ENCODE measurements at regions of chr3 and their contacts with region 1.

Region 1: DNA sequence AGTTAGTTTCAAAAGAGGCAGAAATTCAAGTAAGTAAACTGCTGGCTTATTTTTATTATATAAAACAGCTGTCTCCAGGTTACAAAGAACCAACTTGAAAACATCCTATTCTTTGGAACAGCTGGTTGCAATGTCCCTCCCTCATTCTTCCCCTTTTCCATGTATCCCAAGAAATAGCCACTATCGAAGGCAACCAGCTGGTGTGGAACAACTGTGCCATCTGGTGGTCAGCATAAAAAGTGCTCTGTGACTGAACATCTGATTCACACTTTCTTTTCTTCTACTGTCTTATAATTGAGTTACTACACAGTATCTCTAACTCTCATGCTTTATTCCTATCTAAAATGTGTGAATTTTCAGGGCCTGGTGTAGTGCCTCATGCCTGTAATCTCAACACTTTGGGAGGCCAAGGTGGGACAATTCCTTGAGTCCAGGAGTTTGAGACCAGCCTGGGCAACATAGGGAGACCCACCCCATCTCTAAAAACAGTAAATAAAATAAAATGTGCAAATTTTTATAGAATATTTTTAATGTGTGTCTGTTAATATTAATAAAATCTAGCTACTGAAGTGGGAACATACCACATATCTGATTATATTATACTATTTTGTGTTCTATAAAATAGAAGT is 9.6 kb downstream of the OSBPL11 start:
- DNase-seq: peak; percentile 48
- H3K4me3 ChIP-seq: no peak overlapping the region
- H3K27ac ChIP-seq: no peak overlapping the region
- H3K4me1 ChIP-seq: peaks cover 22% of the 10 kb centered on the region
- CTCF ChIP-seq: peak; percentile 97

Region 2: DNA sequence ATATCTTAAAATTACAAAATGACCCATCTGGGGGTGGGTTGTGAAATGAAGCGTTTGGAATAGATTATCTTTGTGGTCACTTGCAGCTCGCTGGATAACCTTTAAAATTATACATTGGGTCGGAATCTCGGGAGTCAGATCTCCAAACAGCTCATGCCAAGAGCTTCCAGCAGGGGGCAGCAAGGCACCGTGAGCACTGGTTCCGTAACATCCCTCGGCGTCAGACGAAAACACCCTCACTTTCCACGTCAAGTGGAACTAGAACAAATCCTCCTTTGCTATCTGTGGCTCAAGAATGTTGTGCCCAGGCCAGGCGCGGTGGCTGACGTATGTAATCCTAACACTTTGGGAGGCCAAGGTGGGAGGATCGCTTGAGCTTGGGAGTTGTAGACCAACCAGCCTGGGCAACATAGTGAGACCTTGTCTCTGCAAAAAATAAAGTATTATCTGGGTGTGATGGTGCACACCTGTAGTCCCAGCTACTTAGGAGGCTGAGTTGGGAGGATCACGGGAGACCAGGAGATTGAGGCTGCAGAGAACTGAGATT is 824.4 kb before region 1 on chr3:
- CTCF ChIA-PET with region 1: no interaction called
- POLR2A ChIA-PET with region 1: interaction called, 4 read pairs
- intact Hi-C with region 1: loop called (anchors 10 kb)
- DNase-seq: peak; percentile 65
- H3K4me3 ChIP-seq: no peak overlapping the region
- H3K27ac ChIP-seq: no peak overlapping the region
- H3K4me1 ChIP-seq: no peaks in the 10 kb centered on the region
- CTCF ChIP-seq: peak; percentile 94

Region 3: DNA sequence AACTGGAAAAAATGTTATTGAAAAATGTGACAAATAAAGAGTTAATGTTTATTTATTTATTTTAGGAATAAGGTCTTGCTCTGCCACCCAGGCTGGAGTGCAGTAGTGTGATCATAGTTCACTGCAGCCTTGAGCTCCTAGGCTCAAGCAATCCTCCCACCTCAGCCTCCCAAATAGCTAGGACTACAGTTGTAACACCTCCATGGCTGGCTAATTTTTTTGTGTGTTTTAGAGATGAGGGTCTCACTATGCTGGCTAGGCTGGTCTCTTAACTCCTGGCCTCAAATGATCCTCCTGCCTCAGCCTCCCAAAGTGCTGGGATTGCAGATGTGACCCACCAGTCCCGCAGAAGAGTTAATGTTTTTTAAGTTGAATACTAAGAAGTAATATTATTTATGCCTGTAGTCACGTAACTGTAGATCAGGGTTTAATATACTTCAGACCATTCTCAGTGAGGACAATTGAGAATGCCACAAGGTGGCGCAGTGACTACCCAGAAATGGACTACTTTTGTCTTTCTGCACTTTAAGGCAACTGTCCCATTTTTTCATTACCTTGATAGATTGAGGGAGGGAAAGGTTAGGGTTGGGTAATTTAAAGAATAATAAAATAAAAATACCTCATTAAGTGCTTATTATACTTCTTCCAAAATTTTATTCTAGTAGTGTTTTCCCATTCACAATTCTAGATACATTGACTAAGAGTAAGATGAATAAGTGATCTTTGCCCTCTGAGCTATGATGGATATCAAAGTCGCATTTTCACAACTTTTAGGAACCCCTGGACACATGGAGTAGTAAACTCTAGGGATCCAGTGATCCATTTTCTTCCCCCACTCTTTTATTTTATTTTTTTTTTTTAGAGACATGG is 657.1 kb before region 1 on chr3:
- CTCF ChIA-PET with region 1: no interaction called
- POLR2A ChIA-PET with region 1: no interaction called
- intact Hi-C with region 1: loop called (anchors 5 kb)
- DNase-seq: peak; percentile 60
- H3K4me3 ChIP-seq: no peak overlapping the region
- H3K27ac ChIP-seq: no peak overlapping the region
- H3K4me1 ChIP-seq: no peaks in the 10 kb centered on the region
- CTCF ChIP-seq: peak; percentile 90

Region 4: GRCh38 chr3:125150525-125151441 is 434.9 kb before region 1 on chr3:
- CTCF ChIA-PET with region 1: no interaction called
- POLR2A ChIA-PET with region 1: no interaction called
- intact Hi-C with region 1: loop called (anchors 5 kb)
- DNase-seq: peak; percentile 68
- H3K4me3 ChIP-seq: no peak overlapping the region
- H3K27ac ChIP-seq: no peak overlapping the region
- H3K4me1 ChIP-seq: peaks cover 6% of the 10 kb centered on the region
- CTCF ChIP-seq: peak; percentile 86

Region 5: GRCh38 chr3:125478326-125478725 is 107.4 kb before region 1 on chr3:
- CTCF ChIA-PET with region 1: no interaction called
- POLR2A ChIA-PET with region 1: no interaction called
- intact Hi-C with region 1: no loop called
- DNase-seq: no peak
- H3K4me3 ChIP-seq: no peak overlapping the region
- H3K27ac ChIP-seq: no peak overlapping the region
- H3K4me1 ChIP-seq: no peaks in the 10 kb centered on the region
- CTCF ChIP-seq: no peak

Region 6: DNA sequence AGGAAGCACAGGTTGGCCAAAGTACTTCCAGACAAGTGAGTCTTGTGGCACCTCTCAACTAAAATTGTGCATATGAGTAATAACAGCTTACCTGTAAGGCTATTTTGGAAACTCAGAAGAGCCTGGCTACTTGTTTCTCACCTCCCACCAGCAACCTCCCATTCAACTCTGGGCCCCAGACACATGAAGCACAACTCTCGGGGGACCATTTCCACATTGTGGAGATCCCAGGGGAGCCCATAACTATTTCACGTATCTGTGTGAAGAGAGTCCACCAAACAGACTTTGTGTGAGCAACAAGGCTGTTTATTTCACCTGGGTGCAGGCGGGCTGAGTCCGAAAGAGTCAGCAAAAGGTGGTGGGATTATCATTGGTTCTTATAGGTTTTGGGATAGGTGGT is 60.6 kb before region 1 on chr3:
- CTCF ChIA-PET with region 1: no interaction called
- POLR2A ChIA-PET with region 1: no interaction called
- intact Hi-C with region 1: loop called (anchors 5 kb)
- DNase-seq: no peak
- H3K4me3 ChIP-seq: no peak overlapping the region
- H3K27ac ChIP-seq: no peak overlapping the region
- H3K4me1 ChIP-seq: no peaks in the 10 kb centered on the region
- CTCF ChIP-seq: no peak

Measured in OCI-LY7 (cell line).